Activated CD4-positive, alpha-beta T cell treated with anti-CD3 and anti-CD28 coated beads, Interleukin-2, amount 10 ng/mL, durations not matched to agents 24 days and 14 days (primary cell): ENCODE measurements at regions of chr5 and their contacts with region 1.

Region 1: GRCh38 chr5:57598756-57599155 is 116.1 kb upstream of the ACTBL2 start:
- DNase-seq: no peak
- H3K4me3 Mint-ChIP-seq: no peak overlapping the region
- H3K27ac Mint-ChIP-seq: no peak overlapping the region
- H3K4me1 Mint-ChIP-seq: no peaks in the 10 kb centered on the region
- H3K27me3 Mint-ChIP-seq: peaks cover 3% of the 10 kb centered on the region

Region 2: GRCh38 chr5:57538341-57538955 is 60.3 kb before region 1 on chr5:
- intact Hi-C with region 1: loop called (anchors 10 kb)
- DNase-seq: no peak
- H3K4me3 Mint-ChIP-seq: no peak overlapping the region
- H3K27ac Mint-ChIP-seq: no peak overlapping the region
- H3K4me1 Mint-ChIP-seq: peaks cover 2% of the 10 kb centered on the region
- H3K27me3 Mint-ChIP-seq: peaks cover 2% of the 10 kb centered on the region